Caco-2 (cell line): ENCODE measurements at regions of chr5 and their contacts with region 1.

Region 1: DNA sequence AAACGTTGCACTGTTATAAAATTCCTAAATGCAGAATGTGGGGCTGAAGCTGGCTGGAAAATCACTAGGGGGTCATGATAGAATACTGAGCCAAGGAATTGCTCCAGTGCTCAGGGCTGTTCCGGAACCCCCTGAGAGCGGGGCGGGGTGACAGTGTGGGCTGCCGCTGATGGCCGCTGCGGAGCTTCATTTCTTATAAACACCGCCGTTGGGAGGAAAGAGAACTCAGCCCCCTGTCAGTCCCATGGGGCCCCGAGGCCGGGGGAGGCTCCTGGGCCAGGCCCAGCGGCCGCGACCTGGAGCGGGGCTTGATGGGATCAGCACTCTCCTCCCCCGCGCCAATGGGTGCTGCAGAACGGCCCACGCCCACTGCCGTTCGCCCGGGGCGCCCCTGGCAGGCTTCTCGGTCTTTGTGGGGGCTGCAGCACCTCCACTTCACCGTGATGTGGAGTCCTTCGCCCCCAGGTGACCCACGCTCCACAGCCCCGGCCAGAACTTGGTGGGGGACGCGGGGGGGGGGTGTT is 5.2 kb upstream of the IRF1 start:
- DNase-seq: peak; percentile 94
- H3K4me3 ChIP-seq: peak overlapping the region; percentile 54
- H3K4me3 Mint-ChIP-seq: peak overlapping the region; percentile 88
- H3K27ac Mint-ChIP-seq: peak overlapping the region; percentile 85
- H3K4me1 ChIP-seq: peaks cover 46% of the 10 kb centered on the region
- H3K4me1 Mint-ChIP-seq: peaks cover 27% of the 10 kb centered on the region
- H3K27me3 ChIP-seq: no peaks in the 10 kb centered on the region
- H3K27me3 Mint-ChIP-seq: no peaks in the 10 kb centered on the region
- CTCF ChIP-seq: no peak

Region 2: DNA sequence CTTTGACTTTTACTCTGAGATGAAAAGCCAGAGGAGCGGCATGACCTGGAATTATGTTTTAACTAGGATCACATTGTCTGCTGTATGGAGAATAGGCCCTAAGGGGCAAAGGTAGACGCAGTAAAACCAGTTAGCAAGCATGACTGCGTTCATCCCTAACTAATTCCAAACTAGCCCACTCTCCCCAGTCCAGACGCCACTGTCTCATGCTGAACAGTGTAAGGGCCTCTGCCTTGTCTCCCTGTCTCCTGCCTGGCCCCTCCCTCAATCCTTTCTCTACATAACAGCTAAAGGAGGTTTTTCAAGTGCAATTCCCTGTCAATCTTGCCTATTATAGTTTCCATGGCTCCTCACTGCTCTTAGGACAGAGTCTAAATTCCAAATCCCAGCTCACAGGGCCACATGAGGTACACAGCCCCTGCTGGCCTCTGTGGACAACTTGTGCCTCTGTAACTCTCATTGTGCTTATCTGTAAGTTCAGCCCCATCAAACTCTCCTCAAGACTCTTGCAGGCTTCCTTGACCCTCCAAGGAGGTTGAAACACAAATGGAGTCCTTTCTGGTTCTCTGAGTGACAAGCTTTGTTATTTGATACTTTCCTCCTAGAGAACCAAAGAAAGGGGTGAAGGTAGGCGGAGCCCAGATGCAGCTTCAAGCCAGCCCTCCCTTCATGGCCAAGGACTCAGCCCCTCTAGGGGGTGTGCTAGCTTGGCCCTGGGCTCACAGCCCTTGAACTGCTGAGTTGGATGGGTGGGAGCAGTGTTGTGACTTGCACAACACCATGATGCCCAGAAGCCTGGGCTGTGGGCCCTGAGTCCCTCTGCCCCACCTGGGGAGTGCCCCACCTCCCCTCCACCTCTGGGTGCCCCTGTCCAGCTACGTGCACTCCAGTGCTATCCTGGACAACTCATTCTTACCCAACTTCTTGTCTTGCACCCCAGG is 217.5 kb before region 1 on chr5:
- CTCF ChIA-PET with region 1: no interaction called
- POLR2A ChIA-PET with region 1: no interaction called
- intact Hi-C with region 1: loop called (anchors 5 kb)
- DNase-seq: peak; percentile 82 to 91
- H3K4me3 ChIP-seq: no peak overlapping the region
- H3K4me3 Mint-ChIP-seq: peak overlapping the region; percentile 13
- H3K27ac Mint-ChIP-seq: peak overlapping the region; percentile 45
- H3K4me1 ChIP-seq: peaks cover 46% of the 10 kb centered on the region
- H3K4me1 Mint-ChIP-seq: peaks cover 50% of the 10 kb centered on the region
- H3K27me3 ChIP-seq: no peaks in the 10 kb centered on the region
- H3K27me3 Mint-ChIP-seq: no peaks in the 10 kb centered on the region
- CTCF ChIP-seq: peak; percentile 13 to 37

Region 3: DNA sequence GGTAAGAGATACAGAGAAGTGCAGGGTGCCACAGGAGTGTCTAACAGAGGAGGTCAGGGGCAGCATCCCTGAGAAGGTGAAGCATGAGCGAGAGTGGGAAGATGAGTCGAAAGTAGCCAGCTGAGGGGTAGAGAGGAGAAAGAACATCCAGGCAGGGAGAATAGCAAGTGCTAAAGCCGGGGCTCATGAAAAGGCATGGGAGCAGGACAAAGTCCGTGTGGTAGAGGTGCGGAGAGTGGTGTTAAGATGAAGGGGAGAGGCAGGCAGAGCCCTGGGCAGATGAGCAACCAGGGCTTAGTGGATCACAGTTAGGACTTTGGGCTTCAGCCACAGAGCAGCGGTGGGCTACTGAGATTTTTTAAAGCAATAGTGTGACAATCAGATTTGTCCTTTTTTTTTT is 115.7 kb before region 1 on chr5:
- CTCF ChIA-PET with region 1: no interaction called
- POLR2A ChIA-PET with region 1: no interaction called
- intact Hi-C with region 1: no loop called
- DNase-seq: no peak
- H3K4me3 ChIP-seq: no peak overlapping the region
- H3K4me3 Mint-ChIP-seq: no peak overlapping the region
- H3K27ac Mint-ChIP-seq: no peak overlapping the region
- H3K4me1 ChIP-seq: no peaks in the 10 kb centered on the region
- H3K4me1 Mint-ChIP-seq: peaks cover 8% of the 10 kb centered on the region
- H3K27me3 ChIP-seq: no peaks in the 10 kb centered on the region
- H3K27me3 Mint-ChIP-seq: no peaks in the 10 kb centered on the region
- CTCF ChIP-seq: no peak

Region 4: DNA sequence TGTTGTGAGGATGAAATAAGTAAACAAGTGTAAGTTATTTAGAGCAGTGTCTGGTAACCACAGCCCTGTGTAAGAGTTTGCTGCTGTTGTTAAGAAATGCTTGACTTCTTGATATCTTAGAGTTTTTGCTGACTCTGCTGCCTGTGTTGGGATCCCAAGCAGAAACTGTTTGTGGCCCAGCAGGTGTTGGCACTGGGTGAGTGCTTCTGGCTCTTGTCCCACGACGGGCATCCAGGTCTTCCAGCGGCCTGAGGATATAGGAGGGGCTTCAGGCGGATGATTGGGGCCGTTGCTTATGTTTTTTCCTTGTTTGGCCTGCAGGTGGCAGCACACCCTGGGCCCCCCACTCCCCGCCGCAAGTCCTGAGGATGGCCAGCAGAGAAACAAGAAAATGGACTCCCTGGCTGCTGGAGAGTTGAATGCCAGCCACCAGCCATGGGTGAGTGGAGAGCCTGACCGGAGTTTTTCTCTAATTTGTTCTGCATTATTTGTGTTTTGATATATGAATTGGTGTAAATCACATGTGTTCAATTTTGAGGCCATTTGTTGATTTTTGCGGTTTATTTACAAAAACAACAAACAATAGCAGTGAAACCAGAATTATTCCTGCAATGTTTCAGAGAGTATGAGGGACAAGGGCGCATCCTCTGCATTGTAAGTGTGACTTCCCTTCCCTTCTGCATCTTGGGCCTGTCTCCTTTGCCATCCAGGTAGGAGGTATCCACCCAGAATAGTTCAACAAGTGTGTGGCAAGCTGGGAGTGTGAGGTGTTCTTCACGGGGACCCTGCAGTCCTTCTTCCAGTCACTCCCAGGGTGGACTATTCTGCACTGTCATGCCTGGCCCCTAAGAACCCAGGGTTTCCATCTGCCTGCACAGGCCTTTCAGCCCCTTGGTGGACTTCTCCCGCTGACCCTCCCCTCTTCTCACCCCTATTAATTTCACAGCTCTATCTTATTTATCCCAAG is 75.9 kb before region 1 on chr5:
- CTCF ChIA-PET with region 1: interaction called, 4 read pairs
- POLR2A ChIA-PET with region 1: interaction called, 9 read pairs
- intact Hi-C with region 1: loop called (anchors 1 kb)
- DNase-seq: peak; percentile 80 to 84
- H3K4me3 ChIP-seq: no peak overlapping the region
- H3K4me3 Mint-ChIP-seq: no peak overlapping the region
- H3K27ac Mint-ChIP-seq: peak overlapping the region; percentile 15
- H3K4me1 ChIP-seq: peaks cover 25% of the 10 kb centered on the region
- H3K4me1 Mint-ChIP-seq: peaks cover 17% of the 10 kb centered on the region
- H3K27me3 ChIP-seq: no peaks in the 10 kb centered on the region
- H3K27me3 Mint-ChIP-seq: no peaks in the 10 kb centered on the region
- CTCF ChIP-seq: peak; percentile 76 to 85

Region 5: DNA sequence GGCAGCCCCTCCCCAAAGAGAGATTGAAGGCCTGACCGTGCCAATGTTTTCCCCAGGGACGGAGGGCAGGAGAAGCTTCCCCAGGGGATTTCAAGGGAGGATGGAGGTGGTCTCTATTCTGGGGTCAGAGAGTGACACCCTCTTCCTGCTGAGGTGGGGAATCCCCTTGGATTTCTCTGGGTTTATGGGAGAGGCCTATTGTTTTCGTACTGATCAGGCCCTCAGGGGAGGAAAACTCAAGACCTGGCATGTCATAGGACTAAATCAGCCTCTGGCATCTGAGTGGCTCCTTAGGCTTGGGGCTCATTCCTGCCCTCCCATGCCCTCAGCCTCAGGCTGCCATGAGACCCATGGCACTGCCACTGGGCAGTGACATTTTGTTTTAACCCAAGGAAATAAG is 49.8 kb before region 1 on chr5:
- CTCF ChIA-PET with region 1: interaction called, 3 read pairs
- POLR2A ChIA-PET with region 1: interaction called, 5 read pairs
- intact Hi-C with region 1: loop called (anchors 1 kb)
- DNase-seq: no peak
- H3K4me3 ChIP-seq: no peak overlapping the region
- H3K4me3 Mint-ChIP-seq: no peak overlapping the region
- H3K27ac Mint-ChIP-seq: peak overlapping the region; percentile 85
- H3K4me1 ChIP-seq: peaks cover 38% of the 10 kb centered on the region
- H3K4me1 Mint-ChIP-seq: peaks cover 24% of the 10 kb centered on the region
- H3K27me3 ChIP-seq: no peaks in the 10 kb centered on the region
- H3K27me3 Mint-ChIP-seq: no peaks in the 10 kb centered on the region
- CTCF ChIP-seq: no peak

Region 6: DNA sequence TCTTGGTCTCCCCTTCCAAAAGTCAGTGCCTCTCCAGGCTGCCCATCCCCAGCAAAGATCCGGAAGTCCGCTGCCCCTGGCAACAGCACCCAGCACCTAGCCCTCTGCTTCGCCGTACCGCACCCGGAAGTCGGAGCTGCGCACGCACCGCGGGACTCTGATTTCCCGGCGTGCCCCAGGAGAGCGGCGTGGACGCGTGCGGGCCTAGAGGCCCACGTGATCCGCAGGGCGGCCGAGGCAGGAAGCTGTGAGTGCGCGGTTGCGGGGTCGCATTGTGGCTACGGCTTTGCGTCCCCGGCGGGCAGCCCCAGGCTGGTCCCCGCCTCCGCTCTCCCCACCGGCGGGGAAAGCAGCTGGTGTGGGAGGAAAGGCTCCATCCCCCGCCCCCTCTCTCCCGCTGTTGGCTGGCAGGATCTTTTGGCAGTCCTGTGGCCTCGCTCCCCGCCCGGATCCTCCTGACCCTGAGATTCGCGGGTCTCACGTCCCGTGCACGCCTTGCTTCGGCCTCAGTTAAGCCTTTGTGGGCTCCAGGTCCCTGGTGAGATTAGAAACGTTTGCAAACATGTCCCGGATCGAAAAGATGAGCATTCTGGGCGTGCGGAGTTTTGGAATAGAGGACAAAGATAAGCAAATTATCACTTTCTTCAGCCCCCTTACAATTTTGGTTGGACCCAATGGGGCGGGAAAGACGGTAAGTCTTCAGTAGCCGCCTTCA is 61.2 kb after region 1 on chr5 and contains the start of gene RAD50:
- CTCF ChIA-PET with region 1: interaction called, 6 read pairs
- POLR2A ChIA-PET with region 1: interaction called, 12 read pairs
- intact Hi-C with region 1: loop called (anchors 2 kb)
- DNase-seq: peak; percentile 97 to 98
- H3K4me3 ChIP-seq: peak within 1 kb of the TSS; percentile 89
- H3K4me3 Mint-ChIP-seq: peak within 1 kb of the TSS; percentile 99
- H3K27ac Mint-ChIP-seq: peak within 1 kb of the TSS; percentile 100
- H3K4me1 ChIP-seq: peaks cover 11% of the 10 kb centered on the region; the same call in 1 of the 2 replicates
- H3K4me1 Mint-ChIP-seq: peaks cover 13% of the 10 kb centered on the region
- H3K27me3 ChIP-seq: no peaks in the 10 kb centered on the region
- H3K27me3 Mint-ChIP-seq: no peaks in the 10 kb centered on the region
- CTCF ChIP-seq: no peak
- total RNA-seq, gene RAD50: 53.2 and 58.2 TPM in 2 replicates